ENCODE measurements at regions of chr19 and their contacts with region 1.

Region 1: GRCh38 chr19:42283143-42284065 is 14.4 kb downstream of the CIC start:
- DNase-seq: peak; percentile 96 to 98 (median 97)
- H3K4me3 ChIP-seq: peak overlapping the region; percentile 1 to 60
- H3K4me3 Mint-ChIP-seq: no peak overlapping the region
- H3K27ac ChIP-seq: peak overlapping the region; percentile 77
- H3K27ac Mint-ChIP-seq: no peak overlapping the region
- H3K4me1 ChIP-seq: peaks cover 54% of the 10 kb centered on the region
- H3K4me1 Mint-ChIP-seq: peaks cover 32 to 37% (median 33%) of the 10 kb centered on the region in 4 donors
- H3K27me3 ChIP-seq: no peaks in the 10 kb centered on the region
- H3K27me3 Mint-ChIP-seq: no peaks in the 10 kb centered on the region

Region 2: GRCh38 chr19:42219812-42220750 is 63.3 kb before region 1 on chr19 and contains the start of gene ZNF526:
- CTCF ChIA-PET with region 1: interaction called, 3 read pairs
- POLR2A ChIA-PET with region 1: interaction called, 6 read pairs
- intact Hi-C with region 1: loop called (anchors 1 kb)
- DNase-seq: peak; percentile 95 to 97 (median 97)
- H3K4me3 ChIP-seq: peak within 1 kb of the TSS; percentile 82 to 86
- H3K4me3 Mint-ChIP-seq: peak within 1 kb of the TSS; percentile 96 to 100 (median 98)
- H3K27ac ChIP-seq: peak within 1 kb of the TSS; percentile 77
- H3K27ac Mint-ChIP-seq: peak within 1 kb of the TSS; percentile 94 to 99 (median 98)
- H3K4me1 ChIP-seq: peaks cover 45% of the 10 kb centered on the region
- H3K4me1 Mint-ChIP-seq: peaks cover 39 to 69% (median 53%) of the 10 kb centered on the region in 4 donors
- H3K27me3 ChIP-seq: no peaks in the 10 kb centered on the region
- H3K27me3 Mint-ChIP-seq: no peaks in the 10 kb centered on the region
- total RNA-seq, gene ZNF526: 26.7 to 28.8 TPM

Region 3: GRCh38 chr19:42254989-42255765 is 28.2 kb before region 1 on chr19 and contains the start of gene ERF:
- CTCF ChIA-PET with region 1: interaction called, 19 read pairs
- POLR2A ChIA-PET with region 1: interaction called, 20 read pairs
- intact Hi-C with region 1: loop called (anchors 1 kb)
- DNase-seq: peak; percentile 92 to 95 (median 94)
- H3K4me3 ChIP-seq: peak within 1 kb of the TSS; percentile 69 to 90
- H3K4me3 Mint-ChIP-seq: peak within 1 kb of the TSS; percentile 76 to 88 (median 82)
- H3K27ac ChIP-seq: peak within 1 kb of the TSS; percentile 93
- H3K27ac Mint-ChIP-seq: peak within 1 kb of the TSS; percentile 81 to 88 (median 86)
- H3K4me1 ChIP-seq: peaks cover 35% of the 10 kb centered on the region
- H3K4me1 Mint-ChIP-seq: peaks cover 12 to 40% (median 27%) of the 10 kb centered on the region in 4 donors
- H3K27me3 ChIP-seq: no peaks in the 10 kb centered on the region
- H3K27me3 Mint-ChIP-seq: peaks cover 3 to 4% of the 10 kb centered on the region in 2 donors
- total RNA-seq, gene ERF: 38.5 to 39.9 TPM

Region 4: GRCh38 chr19:42268704-42269477 is 14.5 kb before region 1 on chr19 and contains the start of gene CIC:
- CTCF ChIA-PET with region 1: interaction called, 35 read pairs
- POLR2A ChIA-PET with region 1: interaction called, 131 read pairs
- intact Hi-C with region 1: loop called (anchors 1 kb)
- DNase-seq: peak; percentile 100
- H3K4me3 ChIP-seq: peak within 1 kb of the TSS; percentile 83 to 96
- H3K4me3 Mint-ChIP-seq: peak within 1 kb of the TSS in 4 of 8 donors; percentile 89 to 94 (median 92)
- H3K27ac ChIP-seq: peak within 1 kb of the TSS; percentile 99
- H3K27ac Mint-ChIP-seq: peak within 1 kb of the TSS in 4 of 7 donors; percentile 96 to 99 (median 98)
- H3K4me1 ChIP-seq: peaks cover 33% of the 10 kb centered on the region
- H3K4me1 Mint-ChIP-seq: peaks cover 0 to 29% (median 26%) of the 10 kb centered on the region in 4 donors
- H3K27me3 ChIP-seq: no peaks in the 10 kb centered on the region
- H3K27me3 Mint-ChIP-seq: no peaks in the 10 kb centered on the region
- total RNA-seq, gene CIC: 81.6 to 82.6 TPM

Region 5: DNA sequence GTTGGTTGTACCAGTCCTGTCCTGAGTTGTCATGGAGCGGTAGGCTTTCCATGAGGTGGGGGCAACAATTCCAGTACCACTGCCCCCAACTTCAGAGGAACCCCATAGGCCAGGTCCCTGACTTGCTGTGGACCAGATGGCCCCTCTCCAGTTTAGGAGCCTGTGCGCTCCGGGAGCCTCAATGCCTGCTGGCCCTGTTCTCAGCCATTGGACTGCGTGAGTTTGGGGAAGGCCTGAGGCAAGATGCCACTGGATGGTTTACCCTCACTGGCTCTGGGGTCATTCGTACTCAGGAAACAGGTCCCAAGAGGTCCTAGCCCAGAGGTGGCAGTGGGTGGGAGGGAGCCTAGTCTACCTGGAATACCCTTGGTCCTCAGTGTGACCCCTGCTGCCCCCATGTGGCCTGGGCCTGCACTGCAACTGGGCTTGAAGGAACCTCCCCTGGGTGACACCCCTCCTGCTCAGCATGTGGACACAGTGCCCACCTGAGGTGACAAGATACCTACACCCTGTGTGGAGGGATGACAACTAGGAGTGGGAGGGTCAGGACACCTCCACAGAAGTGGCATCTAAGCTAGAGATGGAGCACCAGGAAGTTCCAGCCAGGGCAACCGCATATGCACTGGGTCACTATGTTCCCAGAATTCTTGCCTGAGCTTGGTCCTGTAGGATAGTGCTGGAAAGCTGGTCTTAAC is 12.6 kb after region 1 on chr19:
- CTCF ChIA-PET with region 1: interaction called, 18 read pairs
- POLR2A ChIA-PET with region 1: interaction called, 11 read pairs
- intact Hi-C with region 1: loop called (anchors 1 kb)
- DNase-seq: peak; percentile 78 to 89 (median 85)
- H3K4me3 ChIP-seq: no peak overlapping the region
- H3K4me3 Mint-ChIP-seq: peak overlapping the region in 1 of 8 donors; percentile 25
- H3K27ac ChIP-seq: peak overlapping the region; percentile 11
- H3K27ac Mint-ChIP-seq: peak overlapping the region in 6 of 7 donors; percentile 17 to 79 (median 73)
- H3K4me1 ChIP-seq: peaks cover 8% of the 10 kb centered on the region
- H3K4me1 Mint-ChIP-seq: peaks cover 3 to 22% (median 12%) of the 10 kb centered on the region in 4 donors
- H3K27me3 ChIP-seq: no peaks in the 10 kb centered on the region
- H3K27me3 Mint-ChIP-seq: no peaks in the 10 kb centered on the region

Region 6: DNA sequence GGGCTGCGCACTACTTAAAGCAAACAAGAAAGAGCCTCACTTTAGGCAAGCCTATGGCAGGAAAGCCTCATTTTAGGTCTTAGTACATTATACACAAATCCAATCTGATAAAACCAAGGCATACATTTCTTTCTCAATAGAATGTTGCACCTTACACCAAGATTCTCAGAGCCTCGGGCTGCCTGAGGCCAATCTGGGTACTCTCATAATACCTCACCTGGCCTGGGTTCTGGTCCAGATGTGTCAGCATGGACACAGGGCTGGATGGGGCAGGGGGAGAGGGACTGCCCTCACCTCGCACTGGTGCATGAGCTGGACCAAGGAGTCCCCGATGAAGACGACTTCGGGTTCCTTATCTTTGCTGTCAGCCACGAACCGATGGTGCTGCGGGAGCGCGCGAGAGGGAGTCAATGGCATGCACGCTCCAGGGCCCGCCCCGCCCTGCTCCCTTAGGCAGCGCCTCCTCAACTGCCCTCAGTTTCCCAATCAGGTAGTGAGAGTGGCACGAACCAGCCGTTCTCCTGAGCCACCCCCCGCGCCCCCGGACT is 18.3 kb after region 1 on chr19 and contains the start of gene PRR19:
- CTCF ChIA-PET with region 1: interaction called, 18 read pairs
- POLR2A ChIA-PET with region 1: interaction called, 13 read pairs
- intact Hi-C with region 1: loop called (anchors 1 kb)
- DNase-seq: no peak
- H3K4me3 ChIP-seq: peak within 1 kb of the TSS; percentile 52 to 66
- H3K4me3 Mint-ChIP-seq: peak within 1 kb of the TSS; percentile 85 to 93 (median 90)
- H3K27ac ChIP-seq: peak within 1 kb of the TSS; percentile 63
- H3K27ac Mint-ChIP-seq: peak within 1 kb of the TSS; percentile 81 to 94 (median 89)
- H3K4me1 ChIP-seq: peaks cover 20% of the 10 kb centered on the region
- H3K4me1 Mint-ChIP-seq: peaks cover 16 to 33% (median 22%) of the 10 kb centered on the region in 4 donors
- H3K27me3 ChIP-seq: no peaks in the 10 kb centered on the region
- H3K27me3 Mint-ChIP-seq: no peaks in the 10 kb centered on the region
- total RNA-seq, gene PRR19: 0.28 to 0.64 TPM

Region 7: DNA sequence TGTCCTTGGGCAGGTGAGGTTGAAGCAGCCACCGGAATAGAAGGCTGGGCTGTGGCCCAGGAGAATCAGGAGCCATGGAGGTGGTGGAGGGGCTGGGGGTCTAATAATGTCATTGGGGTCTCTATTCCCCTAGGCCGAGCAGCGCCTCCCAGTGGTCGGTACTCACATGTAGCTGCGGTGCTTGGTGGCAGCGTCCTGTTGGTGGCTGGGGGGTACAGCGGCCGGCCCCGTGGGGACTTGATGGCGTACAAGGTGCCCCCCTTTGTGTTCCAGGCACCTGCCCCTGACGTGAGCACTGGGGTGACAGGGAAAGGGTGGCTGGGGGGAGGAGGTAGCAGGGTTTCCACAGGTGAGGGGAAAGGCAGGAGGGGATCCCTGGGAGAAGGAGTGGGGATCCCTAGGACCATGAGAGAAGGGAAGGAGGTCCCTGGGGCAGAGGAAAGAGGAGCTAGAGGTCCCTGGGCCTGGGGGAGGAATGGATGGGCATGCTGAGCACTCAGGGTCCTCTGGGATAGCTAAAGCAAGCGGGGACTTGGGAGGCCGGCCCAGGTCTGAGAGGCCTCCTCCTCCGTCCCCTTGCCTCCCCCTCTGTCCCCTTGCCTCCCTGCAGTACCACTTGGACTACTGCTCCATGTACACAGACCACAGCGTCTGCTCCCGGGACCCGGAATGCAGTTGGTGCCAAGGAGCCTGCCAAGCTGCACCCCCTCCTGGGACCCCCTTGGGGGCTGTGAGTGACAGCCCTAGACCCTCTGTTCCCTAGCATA is 60.1 kb after region 1 on chr19:
- CTCF ChIA-PET with region 1: no interaction called
- POLR2A ChIA-PET with region 1: no interaction called
- intact Hi-C with region 1: no loop called
- DNase-seq: no peak
- H3K4me3 ChIP-seq: no peak overlapping the region
- H3K4me3 Mint-ChIP-seq: no peak overlapping the region
- H3K27ac ChIP-seq: no peak overlapping the region
- H3K27ac Mint-ChIP-seq: peak overlapping the region in 1 of 7 donors; percentile 31
- H3K4me1 ChIP-seq: no peaks in the 10 kb centered on the region
- H3K4me1 Mint-ChIP-seq: no peaks in the 10 kb centered on the region
- H3K27me3 ChIP-seq: no peaks in the 10 kb centered on the region
- H3K27me3 Mint-ChIP-seq: no peaks in the 10 kb centered on the region

Region 8: GRCh38 chr19:42396381-42397262 is 113.2 kb after region 1 on chr19:
- CTCF ChIA-PET with region 1: no interaction called
- POLR2A ChIA-PET with region 1: no interaction called
- intact Hi-C with region 1: loop called (anchors 5 kb)
- DNase-seq: peak; percentile 88 to 93 (median 90)
- H3K4me3 ChIP-seq: peak overlapping the region; percentile 87 to 97
- H3K4me3 Mint-ChIP-seq: peak overlapping the region; percentile 88 to 96 (median 92)
- H3K27ac ChIP-seq: peak overlapping the region; percentile 72
- H3K27ac Mint-ChIP-seq: peak overlapping the region; percentile 77 to 98 (median 96)
- H3K4me1 ChIP-seq: peaks cover 28% of the 10 kb centered on the region
- H3K4me1 Mint-ChIP-seq: peaks cover 26 to 47% (median 40%) of the 10 kb centered on the region in 4 donors
- H3K27me3 ChIP-seq: no peaks in the 10 kb centered on the region
- H3K27me3 Mint-ChIP-seq: peaks cover 0 to 3% of the 10 kb centered on the region in 2 donors

Measured in CD4-positive, alpha-beta memory T cell (primary cell).